ENCODE measurements at regions of chr6 and their contacts with region 1.

Region 1: GRCh38 chr6:35297601-35298481 is at the start of gene DEF6:
- DNase-seq: peak; percentile 95
- H3K4me3 Mint-ChIP-seq: peak within 1 kb of the TSS; percentile 86
- H3K27ac Mint-ChIP-seq: peak within 1 kb of the TSS; percentile 96
- H3K4me1 Mint-ChIP-seq: peaks cover 45% of the 10 kb centered on the region
- H3K27me3 Mint-ChIP-seq: no peaks in the 10 kb centered on the region
- total RNA-seq, gene DEF6: 103 TPM

Region 2: GRCh38 chr6:35108309-35108885 is 189.4 kb before region 1 on chr6:
- CTCF ChIA-PET with region 1: no interaction called
- POLR2A ChIA-PET with region 1: no interaction called
- intact Hi-C with region 1: no loop called
- DNase-seq: no peak
- H3K4me3 Mint-ChIP-seq: no peak overlapping the region
- H3K27ac Mint-ChIP-seq: no peak overlapping the region
- H3K4me1 Mint-ChIP-seq: no peaks in the 10 kb centered on the region
- H3K27me3 Mint-ChIP-seq: peaks cover 3% of the 10 kb centered on the region

Region 3: DNA sequence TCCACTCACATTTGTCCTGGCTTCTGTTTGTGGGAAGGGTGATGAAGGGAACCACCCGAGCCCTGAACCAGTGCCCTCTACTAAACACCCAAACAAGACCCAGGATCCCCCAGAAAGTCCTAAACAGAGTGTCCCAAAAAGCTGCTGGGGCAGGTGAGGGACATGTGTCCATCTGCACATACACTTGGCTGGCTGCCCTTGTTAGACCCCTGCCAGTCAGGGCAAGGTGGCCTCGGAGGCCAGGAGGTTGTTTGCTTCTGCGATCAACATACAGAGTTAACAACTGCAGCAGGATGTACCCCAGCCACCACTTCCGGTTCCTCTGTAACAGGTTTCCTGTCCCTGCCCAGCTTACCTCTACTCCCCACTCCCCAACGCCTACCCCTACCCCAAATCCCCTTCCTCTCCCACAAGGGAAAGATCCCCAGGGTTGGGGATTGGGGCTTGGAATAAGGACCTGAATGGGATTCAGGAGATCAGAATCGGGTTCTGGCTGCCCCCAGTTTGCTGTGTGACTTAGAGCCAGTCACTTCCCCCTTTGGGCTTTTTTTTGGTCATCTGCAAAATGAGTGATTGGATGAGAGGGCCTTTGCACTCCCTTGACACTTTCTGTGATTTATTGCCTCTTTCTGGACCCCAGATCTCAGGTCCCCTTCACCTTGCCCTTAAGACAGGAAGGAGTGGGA is 13.7 kb after region 1 on chr6:
- CTCF ChIA-PET with region 1: interaction called, 43 read pairs
- POLR2A ChIA-PET with region 1: interaction called, 5 read pairs
- intact Hi-C with region 1: loop called (anchors 1 kb)
- DNase-seq: peak; percentile 73
- H3K4me3 Mint-ChIP-seq: peak overlapping the region; percentile 59
- H3K27ac Mint-ChIP-seq: peak overlapping the region; percentile 97
- H3K4me1 Mint-ChIP-seq: peaks cover 86% of the 10 kb centered on the region
- H3K27me3 Mint-ChIP-seq: no peaks in the 10 kb centered on the region

Region 4: GRCh38 chr6:35342258-35343091 is 44.6 kb after region 1 on chr6 and contains the start of gene PPARD:
- CTCF ChIA-PET with region 1: interaction called, 27 read pairs
- POLR2A ChIA-PET with region 1: interaction called, 3 read pairs
- intact Hi-C with region 1: loop called (anchors 1 kb)
- DNase-seq: peak; percentile 99
- H3K4me3 Mint-ChIP-seq: peak within 1 kb of the TSS; percentile 89
- H3K27ac Mint-ChIP-seq: peak within 1 kb of the TSS; percentile 90
- H3K4me1 Mint-ChIP-seq: peaks cover 44% of the 10 kb centered on the region
- H3K27me3 Mint-ChIP-seq: no peaks in the 10 kb centered on the region
- total RNA-seq, gene PPARD: 19.9 to 20.9 TPM

Region 5: GRCh38 chr6:35452186-35453090 is 154.6 kb after region 1 on chr6 and contains the start of gene FANCE:
- CTCF ChIA-PET with region 1: interaction called, 192 read pairs
- POLR2A ChIA-PET with region 1: interaction called, 7 read pairs
- intact Hi-C with region 1: loop called (anchors 1 kb)
- DNase-seq: peak; percentile 97
- H3K4me3 Mint-ChIP-seq: peak within 1 kb of the TSS; percentile 80
- H3K27ac Mint-ChIP-seq: peak within 1 kb of the TSS; percentile 28
- H3K4me1 Mint-ChIP-seq: peaks cover 32% of the 10 kb centered on the region
- H3K27me3 Mint-ChIP-seq: no peaks in the 10 kb centered on the region
- total RNA-seq, gene FANCE: 18.9 to 19.2 TPM

Region 6: DNA sequence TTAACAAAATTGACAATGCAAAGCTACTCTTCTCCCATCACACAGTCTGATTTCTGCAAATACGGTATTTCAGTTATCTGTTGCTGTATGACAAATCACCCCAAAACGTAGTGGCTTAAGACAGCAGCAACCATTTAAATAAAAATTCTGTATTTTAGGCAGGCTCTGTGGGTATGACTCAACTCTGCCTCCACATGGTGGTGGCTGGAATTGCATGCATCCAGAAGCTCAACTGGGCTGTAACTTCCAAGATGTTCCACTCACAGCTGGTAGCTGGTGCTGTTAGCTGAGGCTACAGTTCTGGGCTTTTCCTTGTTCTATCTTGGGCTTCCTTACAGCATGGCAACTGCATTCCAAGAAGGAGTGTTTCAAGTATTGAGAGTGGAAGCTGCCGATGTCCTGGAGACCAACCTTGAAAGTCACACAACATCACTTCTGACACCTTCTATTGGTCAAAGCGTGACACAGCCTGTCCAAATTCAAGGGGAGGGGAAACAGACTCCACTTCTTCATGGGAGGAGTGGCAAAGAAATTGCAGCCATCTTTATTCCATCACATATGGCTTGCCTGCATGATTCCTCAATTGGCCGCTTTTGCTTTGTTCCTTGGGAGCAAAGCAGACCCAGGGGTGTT is 254.6 kb after region 1 on chr6:
- CTCF ChIA-PET with region 1: interaction called, 12 read pairs
- POLR2A ChIA-PET with region 1: no interaction called
- intact Hi-C with region 1: no loop called
- DNase-seq: peak; percentile 78
- H3K4me3 Mint-ChIP-seq: no peak overlapping the region
- H3K27ac Mint-ChIP-seq: no peak overlapping the region
- H3K4me1 Mint-ChIP-seq: no peaks in the 10 kb centered on the region
- H3K27me3 Mint-ChIP-seq: peaks cover 6% of the 10 kb centered on the region

Region 7: DNA sequence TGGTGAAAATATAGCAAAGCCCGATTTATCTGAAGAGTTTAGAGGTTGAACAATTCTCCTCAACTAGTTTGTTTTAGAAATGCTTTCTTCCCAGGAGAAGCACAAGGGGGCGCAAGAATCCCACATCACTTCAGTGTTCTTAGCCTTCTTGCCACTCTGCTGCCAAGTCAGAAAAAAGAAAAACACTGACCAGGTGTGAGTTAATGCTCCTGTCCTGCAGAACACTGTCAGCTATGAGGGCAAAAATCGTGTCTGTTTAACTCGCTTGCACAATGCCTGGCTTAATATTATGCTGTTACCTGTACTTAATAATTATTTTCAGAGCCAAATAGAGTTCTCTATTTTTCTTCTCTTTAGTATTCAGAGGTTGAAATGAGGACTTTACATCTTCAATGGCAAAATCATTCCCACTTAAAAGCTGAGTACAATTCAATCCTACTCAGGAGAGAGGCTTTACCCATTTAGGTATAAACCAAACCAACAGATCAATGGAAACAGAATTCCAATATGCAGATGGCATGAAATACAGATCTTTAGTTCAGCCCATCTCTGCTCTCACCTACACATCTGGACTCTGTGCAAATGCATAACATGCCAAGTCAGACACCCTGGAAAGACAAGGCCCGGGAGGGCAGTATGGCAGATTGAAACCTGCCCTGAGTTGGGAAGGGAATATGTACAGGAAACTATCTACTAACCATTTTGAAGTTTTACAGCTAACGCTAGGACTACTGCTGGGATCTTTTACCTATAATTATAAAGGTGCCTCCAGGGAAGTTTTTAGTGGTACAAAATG is 286.2 kb after region 1 on chr6:
- CTCF ChIA-PET with region 1: no interaction called
- POLR2A ChIA-PET with region 1: no interaction called
- intact Hi-C with region 1: no loop called
- DNase-seq: peak; percentile 80
- H3K4me3 Mint-ChIP-seq: no peak overlapping the region
- H3K27ac Mint-ChIP-seq: peak overlapping the region; percentile 26
- H3K4me1 Mint-ChIP-seq: peaks cover 54% of the 10 kb centered on the region
- H3K27me3 Mint-ChIP-seq: no peaks in the 10 kb centered on the region